Endothelial cell of umbilical vein (primary cell): ENCODE measurements at regions of chr1 and their contacts with region 1.

Region 1: GRCh38 chr1:204162231-204163074 is 3.7 kb downstream of the REN start:
- DNase-seq: peak; percentile 68
- H3K4me3 ChIP-seq: no peak overlapping the region
- H3K27ac ChIP-seq: no peak overlapping the region
- H3K4me1 ChIP-seq: peaks cover 3% of the 10 kb centered on the region
- H3K27me3 ChIP-seq: peaks cover 0 to 2% of the 10 kb centered on the region in 2 experiments
- CTCF ChIP-seq: peak; percentile 98
- POLR2A ChIP-seq: no peak

Region 2: GRCh38 chr1:204151552-204152309 is 10.7 kb before region 1 on chr1 and contains the start of gene ETNK2:
- CTCF ChIA-PET with region 1: interaction called, 22 read pairs
- POLR2A ChIA-PET with region 1: no interaction called
- dilution Hi-C with region 1: no loop called
- intact Hi-C with region 1: no loop called
- DNase-seq: peak; percentile 61
- H3K4me3 ChIP-seq: peak within 1 kb of the TSS; percentile 20 to 78 (median 53)
- H3K27ac ChIP-seq: no peak within 1 kb of the TSS
- H3K4me1 ChIP-seq: peaks cover 5% of the 10 kb centered on the region
- H3K27me3 ChIP-seq: no peaks in the 10 kb centered on the region
- CTCF ChIP-seq: no peak
- POLR2A ChIP-seq: no peak
- total RNA-seq, gene ETNK2: 13.5 and 15.5 TPM in 2 replicates

Region 3: GRCh38 chr1:204190212-204191211 is 28.1 kb after region 1 on chr1:
- CTCF ChIA-PET with region 1: interaction called, 21 read pairs
- POLR2A ChIA-PET with region 1: no interaction called
- dilution Hi-C with region 1: no loop called
- intact Hi-C with region 1: no loop called
- DNase-seq: peak; percentile 81
- H3K4me3 ChIP-seq: no peak overlapping the region
- H3K27ac ChIP-seq: peak overlapping the region; percentile 90
- H3K4me1 ChIP-seq: peaks cover 32% of the 10 kb centered on the region
- H3K27me3 ChIP-seq: no peaks in the 10 kb centered on the region
- CTCF ChIP-seq: no peak
- POLR2A ChIP-seq: peak; percentile 52

Region 4: GRCh38 chr1:204207136-204207616 is 44.7 kb after region 1 on chr1:
- CTCF ChIA-PET with region 1: interaction called, 770 read pairs
- POLR2A ChIA-PET with region 1: interaction called, 3 read pairs
- dilution Hi-C with region 1: no loop called
- intact Hi-C with region 1: loop called (anchors 1 kb)
- DNase-seq: peak; percentile 41
- H3K4me3 ChIP-seq: no peak overlapping the region
- H3K27ac ChIP-seq: no peak overlapping the region
- H3K4me1 ChIP-seq: no peaks in the 10 kb centered on the region
- H3K27me3 ChIP-seq: no peaks in the 10 kb centered on the region
- CTCF ChIP-seq: peak; percentile 89 to 97
- POLR2A ChIP-seq: no peak

Region 5: DNA sequence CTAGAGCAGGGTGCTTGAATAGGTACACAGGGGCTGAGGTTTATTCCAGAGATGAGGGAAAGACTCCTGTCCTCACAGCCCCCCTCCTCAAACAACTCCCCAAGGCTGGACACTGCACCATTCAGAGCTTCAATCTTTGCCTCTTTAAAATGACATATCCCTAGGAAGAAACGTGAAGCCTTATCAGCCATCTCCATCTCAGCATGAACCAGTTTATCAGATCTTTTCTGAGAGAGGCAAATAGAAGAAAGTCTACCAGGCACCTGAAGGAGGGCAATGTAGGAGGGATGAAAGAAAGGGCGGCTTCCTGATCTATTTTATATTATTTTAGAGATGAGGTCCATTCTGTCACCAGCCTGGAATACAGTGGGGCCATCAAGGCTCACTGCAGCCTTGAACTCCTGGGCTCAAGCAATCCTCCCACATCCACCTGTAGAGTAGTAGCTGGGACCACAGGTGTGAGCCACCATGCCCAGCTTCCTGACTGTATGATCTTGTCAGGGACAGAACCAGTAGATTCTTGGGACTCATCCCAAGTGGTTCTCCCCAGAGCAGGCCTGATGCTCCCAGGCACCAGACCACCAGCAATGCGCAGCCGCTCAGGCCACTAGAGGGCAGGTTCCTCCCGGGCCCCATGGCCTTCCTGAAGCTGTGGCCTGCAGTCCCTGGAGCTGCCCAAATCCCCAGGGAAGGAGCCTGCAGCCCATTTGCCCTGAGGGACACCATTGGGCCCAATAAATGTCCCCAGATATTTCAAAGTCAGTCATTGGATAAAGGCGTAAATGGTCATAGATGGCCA is 95.7 kb after region 1 on chr1:
- CTCF ChIA-PET with region 1: interaction called, 13 read pairs
- POLR2A ChIA-PET with region 1: no interaction called
- dilution Hi-C with region 1: no loop called
- intact Hi-C with region 1: loop called (anchors 1 kb)
- DNase-seq: peak; percentile 69
- H3K4me3 ChIP-seq: no peak overlapping the region
- H3K27ac ChIP-seq: no peak overlapping the region
- H3K4me1 ChIP-seq: no peaks in the 10 kb centered on the region
- H3K27me3 ChIP-seq: no peaks in the 10 kb centered on the region
- CTCF ChIP-seq: peak; percentile 89 to 96
- POLR2A ChIP-seq: no peak

Region 6: GRCh38 chr1:204363335-204364124 is 201.1 kb after region 1 on chr1:
- CTCF ChIA-PET with region 1: interaction called, 90 read pairs
- POLR2A ChIA-PET with region 1: no interaction called
- dilution Hi-C with region 1: no loop called
- intact Hi-C with region 1: loop called (anchors 1 kb)
- DNase-seq: peak; percentile 83
- H3K4me3 ChIP-seq: peak overlapping the region in 2 of 3 experiments; percentile 30 to 35
- H3K27ac ChIP-seq: no peak overlapping the region
- H3K4me1 ChIP-seq: peaks cover 53% of the 10 kb centered on the region
- H3K27me3 ChIP-seq: no peaks in the 10 kb centered on the region
- CTCF ChIP-seq: peak; percentile 93 to 94
- POLR2A ChIP-seq: no peak